ENCODE measurements at regions of chr17 and their contacts with region 1.

Region 1: DNA sequence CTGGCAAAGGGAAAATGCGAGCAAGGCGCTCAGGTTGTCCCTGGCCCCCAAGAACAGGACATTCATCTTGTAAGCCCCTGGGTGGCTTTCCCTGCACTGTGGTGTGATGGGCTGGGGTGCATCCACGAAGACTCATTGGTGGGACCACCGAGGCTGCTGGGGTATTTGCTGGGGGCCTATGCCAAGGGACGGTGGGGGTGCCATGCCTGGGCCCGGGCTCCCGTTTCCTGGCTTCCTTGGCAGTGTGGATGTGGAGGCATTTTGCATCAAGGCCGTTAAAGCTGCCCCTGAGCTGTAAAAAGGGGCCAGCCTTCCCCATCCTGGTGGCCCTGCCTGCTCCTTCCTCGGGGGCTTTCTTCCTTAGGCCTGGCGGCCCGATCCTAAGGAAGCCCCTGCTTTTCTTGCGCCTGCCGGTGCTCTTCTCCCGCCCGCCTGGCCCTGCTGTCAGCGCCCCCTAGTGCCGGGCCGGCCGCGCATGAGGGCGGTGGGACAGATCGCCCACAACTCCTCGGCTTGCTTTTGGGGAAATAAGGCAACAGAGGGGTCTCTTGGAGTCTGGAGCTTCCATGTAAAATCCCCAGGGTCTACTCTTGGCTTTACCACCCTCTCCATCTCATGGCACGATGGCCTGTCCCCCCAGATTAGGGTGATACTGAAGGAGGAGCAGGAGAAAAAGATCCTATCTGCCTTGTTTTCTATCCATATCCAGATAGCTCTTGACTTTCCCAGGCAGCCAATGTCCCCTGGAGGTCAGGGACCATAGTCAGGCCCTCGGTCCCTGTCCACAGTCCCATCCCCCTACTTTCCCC is 9.8 kb upstream of the TBX2 start:
- DNase-seq: peak; percentile 68

Region 2: GRCh38 chr17:60720763-60721531 is 668.9 kb before region 1 on chr17:
- in situ Hi-C with region 1: loop called (anchors 25 kb)
- DNase-seq: peak; percentile 72

Region 3: GRCh38 chr17:61002316-61002736 is 387.5 kb before region 1 on chr17:
- in situ Hi-C with region 1: loop called (anchors 25 kb)
- DNase-seq: peak; percentile 55

Region 4: GRCh38 chr17:61057257-61057656 is 332.6 kb before region 1 on chr17:
- in situ Hi-C with region 1: no loop called
- DNase-seq: no peak

Region 5: GRCh38 chr17:61208301-61209105 is 181.4 kb before region 1 on chr17:
- in situ Hi-C with region 1: no loop called
- DNase-seq: no peak

Region 6: GRCh38 chr17:62085511-62086408 is 695.9 kb after region 1 on chr17:
- in situ Hi-C with region 1: no loop called
- DNase-seq: no peak